ENCODE measurements at regions of chr14 and their contacts with region 1.

Region 1: DNA sequence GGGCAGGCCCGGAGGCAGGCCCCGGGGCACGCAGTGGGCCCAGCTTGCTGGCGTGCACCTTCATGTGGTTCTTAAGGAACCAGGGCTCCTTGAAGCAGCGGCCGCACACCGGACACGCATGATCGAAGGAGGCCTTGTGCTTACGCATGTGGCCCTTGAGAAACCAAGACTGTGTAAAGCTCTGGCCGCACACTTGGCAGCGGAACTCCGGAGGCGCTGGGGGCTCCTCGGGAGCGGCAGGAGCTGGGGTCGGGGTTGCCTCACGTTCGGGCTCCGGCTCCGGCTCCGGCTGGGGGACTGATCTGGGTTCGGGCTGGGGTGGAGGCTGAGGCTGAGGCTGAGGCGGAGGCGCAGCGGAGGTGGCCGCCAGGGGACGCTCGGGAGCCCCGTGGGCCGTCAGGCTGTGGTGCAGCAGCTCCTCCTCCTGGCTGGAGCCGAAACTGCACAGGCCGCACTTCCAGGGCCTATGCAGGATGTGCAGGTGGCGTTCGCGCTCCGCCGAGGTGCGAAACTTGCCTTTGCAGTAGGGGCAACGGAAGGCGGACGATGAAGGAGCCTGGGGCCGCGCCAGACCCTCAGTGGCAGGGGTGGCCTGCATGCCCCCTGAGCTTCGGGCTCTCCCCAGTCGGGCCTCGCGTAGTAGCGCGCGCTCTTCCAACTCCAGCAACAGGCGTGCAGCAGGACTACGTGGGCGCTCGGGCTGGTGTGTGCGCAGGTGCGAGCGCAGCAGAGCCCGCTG is 6.0 kb downstream of the ZNF219 start:
- DNase-seq: peak; percentile 89 to 97
- ATAC-seq: peak; percentile 93
- H3K4me3 ChIP-seq: no peak overlapping the region
- H3K27ac ChIP-seq: no peak overlapping the region
- H3K4me1 ChIP-seq: no peaks in the 10 kb centered on the region
- H3K27me3 ChIP-seq: no peaks in the 10 kb centered on the region

Region 2: GRCh38 chr14:21014761-21015190 is 77.7 kb before region 1 on chr14:
- intact Hi-C with region 1: loop called (anchors 2 to 5 kb)
- DNase-seq: peak; percentile 87 to 90
- ATAC-seq: peak; percentile 88
- H3K4me3 ChIP-seq: no peak overlapping the region
- H3K27ac ChIP-seq: no peak overlapping the region
- H3K4me1 ChIP-seq: no peaks in the 10 kb centered on the region
- H3K27me3 ChIP-seq: no peaks in the 10 kb centered on the region

Region 3: DNA sequence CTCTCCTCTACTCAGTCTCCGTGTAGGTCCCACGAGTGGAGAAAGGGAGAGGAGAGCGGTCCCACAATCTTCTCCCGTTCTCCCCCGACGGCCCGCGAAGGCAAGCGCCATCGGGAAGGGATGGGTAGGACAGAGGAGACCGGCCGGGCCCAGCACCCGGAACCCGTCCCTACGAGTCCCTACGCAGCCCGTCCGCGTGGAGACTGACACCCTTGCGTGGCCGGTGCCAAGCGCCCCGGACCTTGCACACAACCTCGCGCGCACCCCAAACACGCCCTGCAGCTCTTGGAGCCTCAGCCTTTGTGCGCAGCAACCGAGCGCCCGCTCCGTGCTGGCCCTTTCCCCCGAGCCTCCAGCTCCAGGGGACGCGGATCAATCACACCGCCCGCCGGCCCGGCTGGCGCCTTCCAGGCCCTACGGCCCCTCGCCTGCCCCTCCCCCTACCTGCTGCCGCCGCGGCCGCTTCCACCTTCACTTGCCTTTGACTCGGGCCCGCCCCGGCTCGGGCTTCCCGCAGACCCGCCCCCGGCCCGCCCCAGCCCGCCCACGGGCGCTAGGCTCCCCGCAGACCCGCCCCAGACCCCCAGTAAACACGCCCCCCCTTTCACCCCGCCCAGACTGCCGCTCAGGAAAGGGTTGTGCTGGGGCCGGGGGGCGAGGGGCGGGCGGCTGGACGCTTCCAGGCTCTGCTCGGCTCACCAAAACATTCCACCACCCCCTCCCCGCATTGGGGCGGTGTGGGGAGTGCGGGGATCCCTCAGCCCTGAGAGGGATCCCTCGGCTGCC is 67.7 kb before region 1 on chr14 and contains the start of gene NDRG2:
- intact Hi-C with region 1: loop called (anchors 5 kb)
- DNase-seq: peak; percentile 83 to 89
- ATAC-seq: peak; percentile 90
- H3K4me3 ChIP-seq: peak within 1 kb of the TSS; percentile 42 to 63
- H3K27ac ChIP-seq: peak within 1 kb of the TSS; percentile 62 to 91
- H3K4me1 ChIP-seq: peaks cover 0 to 3% of the 10 kb centered on the region in 2 donors
- H3K27me3 ChIP-seq: no peaks in the 10 kb centered on the region
- total RNA-seq, gene NDRG2: 68.7 to 107 TPM

Region 4: GRCh38 chr14:21071225-21072030 is 21.0 kb before region 1 on chr14:
- intact Hi-C with region 1: loop called (anchors 1 to 2 kb)
- DNase-seq: peak; percentile 96
- ATAC-seq: peak; percentile 88
- H3K4me3 ChIP-seq: peak overlapping the region; percentile 51 to 63
- H3K27ac ChIP-seq: peak overlapping the region; percentile 34 to 49
- H3K4me1 ChIP-seq: no peaks in the 10 kb centered on the region
- H3K27me3 ChIP-seq: no peaks in the 10 kb centered on the region